WTC11 (cell line): ENCODE measurements at regions of chr12 and their contacts with region 1.

Region 1: DNA sequence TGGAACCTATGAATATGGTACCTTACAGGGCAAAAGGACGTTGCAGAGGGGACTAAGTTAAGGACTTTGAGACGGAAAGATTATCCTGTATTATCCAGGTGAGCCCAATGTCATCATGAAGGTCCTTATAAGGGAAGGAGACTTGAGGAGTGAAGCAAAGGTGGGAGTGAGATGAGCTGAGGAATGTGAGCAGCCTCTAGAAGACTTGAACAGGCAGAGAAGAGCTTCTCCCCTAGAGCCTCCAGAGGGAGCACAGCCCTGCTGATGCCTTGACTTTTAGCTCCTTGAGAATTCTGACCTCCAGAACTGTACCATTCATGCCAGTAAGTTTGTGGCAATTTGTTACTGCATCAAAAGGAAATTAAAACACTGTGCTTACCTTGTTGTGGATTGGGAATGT is 41.8 kb upstream of the DCD start:
- DNase-seq: peak; percentile 40
- ATAC-seq: peak; percentile 99
- H3K4me3 Mint-ChIP-seq: no peak overlapping the region
- H3K27ac Mint-ChIP-seq: no peak overlapping the region
- H3K4me1 Mint-ChIP-seq: peaks cover 20% of the 10 kb centered on the region
- H3K27me3 Mint-ChIP-seq: peaks cover 24% of the 10 kb centered on the region
- CTCF ChIP-seq: no peak

Region 2: DNA sequence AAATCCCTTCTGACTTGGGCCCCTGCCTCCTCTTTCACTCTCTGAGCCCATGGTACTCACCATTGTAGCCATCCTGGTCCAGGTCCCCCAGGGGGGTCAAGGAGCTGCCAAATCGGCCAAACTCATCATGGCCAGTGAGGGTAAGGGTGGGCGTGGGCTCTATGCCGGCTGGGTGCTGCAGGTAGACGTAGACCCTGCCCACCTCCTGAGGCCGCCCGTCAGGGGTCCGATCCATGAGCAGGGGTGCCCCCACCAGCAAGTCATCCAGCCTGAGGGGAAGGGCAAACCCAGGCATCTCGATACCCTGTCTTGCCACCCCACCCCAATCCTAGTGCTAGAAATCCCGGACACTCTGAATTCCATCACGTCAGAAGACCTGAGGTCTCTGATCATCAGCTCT is 284.9 kb before region 1 on chr12:
- CTCF ChIA-PET with region 1: no interaction called
- POLR2A ChIA-PET with region 1: no interaction called
- DNase-seq: no peak
- ATAC-seq: no peak
- H3K4me3 Mint-ChIP-seq: no peak overlapping the region
- H3K27ac Mint-ChIP-seq: no peak overlapping the region
- H3K4me1 Mint-ChIP-seq: peaks cover 6% of the 10 kb centered on the region; the same call in 1 of the 2 replicates
- H3K27me3 Mint-ChIP-seq: no peaks in the 10 kb centered on the region
- CTCF ChIP-seq: no peak

Region 3: GRCh38 chr12:54723379-54724256 is 33.6 kb after region 1 on chr12:
- CTCF ChIA-PET with region 1: interaction called, 10 read pairs
- POLR2A ChIA-PET with region 1: no interaction called
- DNase-seq: no peak
- ATAC-seq: peak; percentile 51
- H3K4me3 Mint-ChIP-seq: no peak overlapping the region
- H3K27ac Mint-ChIP-seq: no peak overlapping the region
- H3K4me1 Mint-ChIP-seq: peaks cover 41% of the 10 kb centered on the region
- H3K27me3 Mint-ChIP-seq: no peaks in the 10 kb centered on the region
- CTCF ChIP-seq: peak; percentile 53

Region 4: GRCh38 chr12:54831631-54832030 is 141.6 kb after region 1 on chr12:
- CTCF ChIA-PET with region 1: no interaction called
- POLR2A ChIA-PET with region 1: no interaction called
- DNase-seq: no peak
- ATAC-seq: no peak
- H3K4me3 Mint-ChIP-seq: no peak overlapping the region
- H3K27ac Mint-ChIP-seq: no peak overlapping the region
- H3K4me1 Mint-ChIP-seq: peaks cover 5% of the 10 kb centered on the region
- H3K27me3 Mint-ChIP-seq: no peaks in the 10 kb centered on the region
- CTCF ChIP-seq: no peak

Region 5: GRCh38 chr12:54958048-54958658 is 268.2 kb after region 1 on chr12:
- CTCF ChIA-PET with region 1: interaction called, 12 read pairs
- POLR2A ChIA-PET with region 1: no interaction called
- DNase-seq: peak; percentile 33
- ATAC-seq: no peak; the same call in 1 of the 2 replicates
- H3K4me3 Mint-ChIP-seq: no peak overlapping the region
- H3K27ac Mint-ChIP-seq: no peak overlapping the region
- H3K4me1 Mint-ChIP-seq: peaks cover 24% of the 10 kb centered on the region
- H3K27me3 Mint-ChIP-seq: peaks cover 4% of the 10 kb centered on the region; the same call in 1 of the 2 replicates
- CTCF ChIP-seq: peak; percentile 29; the same call in 1 of the 2 replicates